Ascending aorta (tissue), 2 donors: ENCODE measurements at regions of chr3 and their contacts with region 1.

Region 1: DNA sequence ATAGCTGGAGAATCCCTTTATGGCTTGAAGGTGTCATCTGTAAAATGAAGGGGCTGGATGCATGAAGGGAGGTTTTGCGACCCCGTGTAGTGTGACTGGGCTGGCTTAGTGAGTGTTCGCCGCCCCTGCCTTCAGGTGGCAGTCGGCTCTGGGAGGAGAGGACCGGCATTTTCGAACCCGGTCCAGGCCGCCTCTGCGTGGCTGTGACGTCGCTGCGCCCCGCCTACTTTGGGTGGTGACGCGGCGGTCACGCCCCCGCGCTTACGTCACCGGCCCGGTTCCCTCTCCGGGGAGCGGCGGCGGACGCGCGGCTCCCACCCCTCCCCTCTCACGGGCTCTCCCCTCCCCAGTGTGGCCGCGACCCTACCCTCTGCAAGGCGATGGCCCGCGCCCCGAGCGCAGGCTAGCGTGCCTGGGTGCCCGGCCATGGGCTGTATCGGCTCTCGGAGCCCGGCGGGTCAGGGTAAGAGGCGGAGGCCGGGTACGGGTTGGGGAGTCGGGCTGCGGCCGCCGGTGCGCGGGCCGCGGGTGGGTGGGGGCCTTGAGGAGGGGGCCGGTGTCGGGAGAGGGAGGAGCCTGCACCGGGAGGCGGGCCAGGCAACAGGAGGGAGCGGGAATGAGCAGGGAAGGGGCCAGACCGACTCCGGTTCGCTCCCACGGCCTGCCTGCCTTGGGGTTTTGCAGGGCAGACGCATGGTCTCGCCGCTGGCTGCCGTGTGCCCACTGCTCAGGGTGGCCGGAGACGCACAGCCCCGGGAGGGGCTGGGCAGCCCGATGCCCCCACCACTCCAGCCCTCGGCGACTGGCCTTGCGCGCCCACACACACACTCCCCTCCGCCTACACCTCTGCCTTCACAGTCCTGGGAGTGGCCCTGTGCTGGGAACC is 1.5 kb upstream of the FAM131A start:
- DNase-seq: peak; percentile 33 to 93
- H3K4me3 ChIP-seq: peak overlapping the region; percentile 88 to 96
- H3K27ac ChIP-seq: peak overlapping the region; percentile 97 to 99
- H3K4me1 ChIP-seq: peaks cover 7 to 16% of the 10 kb centered on the region in 2 donors
- H3K27me3 ChIP-seq: no peaks in the 10 kb centered on the region
- CTCF ChIP-seq: no peak

Region 2: GRCh38 chr3:183635431-183636220 is 700.3 kb before region 1 on chr3 and contains the start of gene KLHL24:
- intact Hi-C with region 1: loop called (anchors 10 kb)
- DNase-seq: peak; percentile 83 to 95
- H3K4me3 ChIP-seq: peak within 1 kb of the TSS; percentile 91 to 95
- H3K27ac ChIP-seq: peak within 1 kb of the TSS; percentile 92 to 100
- H3K4me1 ChIP-seq: peaks cover 0 to 16% of the 10 kb centered on the region in 2 donors
- H3K27me3 ChIP-seq: no peaks in the 10 kb centered on the region
- CTCF ChIP-seq: peak in 1 of 3 experiments; percentile 6
- total RNA-seq, gene KLHL24: 26.6 TPM

Region 3: DNA sequence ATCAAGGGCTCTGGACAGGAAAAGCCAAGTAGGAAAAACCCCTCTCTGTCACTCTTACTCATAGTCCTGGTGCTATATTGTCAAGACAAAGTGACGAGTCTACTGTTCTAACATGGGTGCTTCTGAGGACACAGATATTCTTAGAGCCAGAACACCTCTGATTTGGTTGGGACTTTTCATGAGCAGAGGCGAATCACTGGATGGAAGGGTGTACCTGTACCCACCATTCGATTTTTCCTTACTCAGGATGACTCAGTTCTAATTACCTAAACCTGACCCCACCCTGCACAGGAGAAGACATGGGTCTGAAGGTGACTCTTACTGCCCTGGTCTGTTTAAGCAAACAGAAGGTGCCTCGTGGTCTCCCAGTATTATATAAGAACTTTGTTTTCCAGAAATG is 376.7 kb before region 1 on chr3:
- intact Hi-C with region 1: no loop called
- DNase-seq: no peak
- H3K4me3 ChIP-seq: no peak overlapping the region
- H3K27ac ChIP-seq: no peak overlapping the region
- H3K4me1 ChIP-seq: no peaks in the 10 kb centered on the region
- H3K27me3 ChIP-seq: no peaks in the 10 kb centered on the region
- CTCF ChIP-seq: no peak

Region 4: DNA sequence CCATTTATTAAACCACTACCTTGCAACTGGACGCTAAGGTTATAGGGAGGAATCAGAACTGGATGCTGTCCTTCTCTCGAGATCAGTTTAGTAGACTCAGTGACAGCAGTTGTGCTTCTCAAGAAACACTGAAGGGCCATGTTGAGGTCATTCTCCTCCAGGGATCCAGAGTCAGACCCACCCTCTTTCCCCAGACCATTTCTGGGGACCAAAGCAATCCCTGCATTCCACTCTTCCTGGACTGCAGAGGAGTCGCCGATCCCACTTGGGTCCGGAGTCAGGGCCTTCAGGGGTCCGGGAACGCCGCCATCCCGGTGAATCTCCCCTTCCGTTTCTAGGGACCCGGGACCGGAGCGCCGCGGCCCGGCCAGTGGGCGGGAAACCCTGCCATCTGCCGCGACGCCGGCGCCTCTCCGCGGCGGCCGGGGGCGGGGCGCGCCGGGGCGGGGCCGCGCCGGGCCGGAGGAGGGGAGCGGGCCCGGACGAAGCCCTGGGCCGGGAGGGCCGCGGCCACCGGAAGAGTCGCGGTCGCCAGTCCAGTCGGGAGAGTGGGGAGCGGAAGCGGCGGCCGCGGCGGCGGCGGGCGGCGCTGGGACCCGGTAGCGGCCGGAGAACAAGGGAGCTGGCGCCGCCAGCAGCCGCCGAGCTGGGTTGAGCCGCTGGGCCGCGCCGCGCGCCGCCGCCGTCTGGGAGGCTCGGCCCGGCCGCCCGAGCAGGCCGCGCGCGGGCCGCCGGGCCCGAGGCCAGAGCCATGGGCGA is 180.8 kb before region 1 on chr3 and contains the start of gene DVL3:
- intact Hi-C with region 1: no loop called
- DNase-seq: peak in 1 of 2 donors; percentile 81
- H3K4me3 ChIP-seq: peak within 1 kb of the TSS; percentile 80 to 97
- H3K27ac ChIP-seq: peak within 1 kb of the TSS; percentile 87 to 89
- H3K4me1 ChIP-seq: peaks cover 9 to 21% of the 10 kb centered on the region in 2 donors
- H3K27me3 ChIP-seq: no peaks in the 10 kb centered on the region
- CTCF ChIP-seq: no peak
- total RNA-seq, gene DVL3: 36.6 TPM

Region 5: DNA sequence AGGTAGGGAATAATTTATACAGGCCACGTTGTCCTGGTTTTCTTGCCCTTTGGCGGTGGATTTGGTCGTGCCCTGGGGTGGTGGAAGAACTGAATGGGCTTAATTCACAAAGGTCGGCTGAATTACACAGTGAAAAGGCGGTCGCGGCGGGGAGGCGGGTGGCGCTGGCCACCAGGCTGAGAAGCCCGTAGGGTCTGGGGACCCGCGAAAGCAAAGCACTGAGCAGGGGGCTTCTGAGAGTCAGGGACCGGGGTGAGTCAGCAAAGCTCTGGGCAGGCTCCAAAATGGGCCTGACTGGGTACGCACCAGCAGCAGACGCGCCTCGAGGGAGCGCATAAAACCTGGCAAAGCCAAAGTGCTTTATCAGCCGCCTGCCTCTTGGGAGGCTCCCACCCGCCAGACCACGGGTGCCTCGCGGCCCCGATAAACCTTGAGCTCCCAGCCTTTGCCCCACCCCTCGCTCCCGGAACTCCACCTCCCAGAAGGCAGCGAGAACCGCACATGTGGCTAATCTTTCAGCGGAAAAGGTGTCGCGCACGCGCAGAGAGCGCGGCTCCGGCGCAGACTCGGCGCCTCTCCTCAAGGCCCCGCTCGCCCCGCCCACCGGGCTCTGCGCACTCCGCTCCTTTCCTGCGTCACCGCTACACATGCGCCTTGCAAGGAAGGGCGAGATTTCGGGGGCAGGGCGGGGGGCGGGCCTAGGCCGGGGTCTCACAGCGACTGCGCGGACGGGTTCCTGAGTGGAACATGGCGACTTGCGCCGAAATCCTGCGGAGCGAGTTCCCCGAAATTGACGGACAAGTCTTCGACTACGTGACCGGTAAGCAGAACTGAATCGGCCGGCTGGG is 150.2 kb before region 1 on chr3 and contains the start of gene ABCF3:
- intact Hi-C with region 1: loop called (anchors 5 kb)
- DNase-seq: peak; percentile 98 to 100
- H3K4me3 ChIP-seq: peak within 1 kb of the TSS; percentile 91 to 97
- H3K27ac ChIP-seq: peak within 1 kb of the TSS; percentile 87 to 93
- H3K4me1 ChIP-seq: peaks cover 0 to 16% of the 10 kb centered on the region in 2 donors
- H3K27me3 ChIP-seq: no peaks in the 10 kb centered on the region
- CTCF ChIP-seq: no peak
- total RNA-seq, gene ABCF3: 93.3 TPM

Region 6: GRCh38 chr3:184298759-184299496 is 37.0 kb before region 1 on chr3 and contains the start of gene PSMD2:
- intact Hi-C with region 1: loop called (anchors 1 kb)
- DNase-seq: peak; percentile 84 to 99
- H3K4me3 ChIP-seq: peak within 1 kb of the TSS; percentile 75 to 78
- H3K27ac ChIP-seq: peak within 1 kb of the TSS; percentile 73 to 76
- H3K4me1 ChIP-seq: no peaks in the 10 kb centered on the region
- H3K27me3 ChIP-seq: no peaks in the 10 kb centered on the region
- CTCF ChIP-seq: peak in 1 of 3 experiments; percentile 18
- total RNA-seq, gene PSMD2: 151 TPM

Region 7: GRCh38 chr3:184320099-184320445 is 15.8 kb before region 1 on chr3:
- intact Hi-C with region 1: loop called (anchors 1 kb)
- DNase-seq: peak; percentile 93 to 98
- H3K4me3 ChIP-seq: peak overlapping the region; percentile 52 to 79
- H3K27ac ChIP-seq: peak overlapping the region; percentile 90 to 95
- H3K4me1 ChIP-seq: peaks cover 30 to 43% of the 10 kb centered on the region in 2 donors
- H3K27me3 ChIP-seq: no peaks in the 10 kb centered on the region
- CTCF ChIP-seq: no peak

Region 8: DNA sequence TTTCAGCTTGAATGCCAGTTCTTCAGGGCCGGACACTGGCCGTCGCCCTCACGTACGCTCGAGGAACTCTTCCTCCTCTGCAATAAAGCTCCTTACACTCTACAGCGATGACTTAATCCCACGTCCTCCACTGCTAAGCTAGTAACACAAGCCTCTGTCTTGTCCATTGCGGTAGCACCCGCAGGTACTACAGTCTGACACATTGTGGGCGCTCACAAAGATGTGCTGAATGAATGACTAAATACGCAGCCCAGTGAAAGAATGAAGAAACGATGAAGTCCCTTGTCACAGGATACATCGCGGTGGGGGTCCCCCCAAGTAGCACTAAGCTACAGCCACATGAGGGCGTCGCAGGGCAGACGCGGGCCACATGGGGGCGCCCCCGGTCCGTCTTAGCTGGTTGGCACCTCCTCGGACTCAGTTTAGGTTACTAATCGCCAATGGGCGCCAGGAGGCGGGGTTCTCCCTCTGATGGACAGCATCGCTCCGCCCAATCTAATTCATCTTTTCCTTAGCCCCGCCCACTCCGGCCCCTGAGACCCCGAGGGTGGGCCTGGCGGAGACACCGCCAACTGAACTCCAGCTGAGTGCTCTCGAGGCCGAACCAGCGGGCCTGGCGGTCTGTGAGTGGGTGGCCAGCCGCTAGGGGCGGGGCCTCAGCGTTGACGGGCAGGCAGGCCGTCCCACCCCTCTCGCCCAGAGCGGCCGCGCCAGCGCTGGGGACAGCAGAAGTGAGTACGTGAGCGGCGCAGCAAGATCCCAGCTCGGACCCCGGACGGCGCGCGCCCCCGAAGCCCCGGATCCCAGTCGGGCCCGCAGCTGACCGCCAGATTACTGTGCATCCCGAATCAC is 225.4 kb after region 1 on chr3 and contains the start of gene EPHB3:
- intact Hi-C with region 1: loop called (anchors 1 kb)
- DNase-seq: peak; percentile 98 to 100
- H3K4me3 ChIP-seq: peak within 1 kb of the TSS; percentile 69 to 75
- H3K27ac ChIP-seq: peak within 1 kb of the TSS; percentile 73
- H3K4me1 ChIP-seq: peaks cover 0 to 17% of the 10 kb centered on the region in 2 donors
- H3K27me3 ChIP-seq: no peaks in the 10 kb centered on the region
- CTCF ChIP-seq: peak; percentile 94 to 99 (median 96)
- total RNA-seq, gene EPHB3: 1.2 TPM